ENCODE measurements at regions of chr3 and their contacts with region 1.

Region 1: GRCh38 chr3:179929091-179929529 is 107.6 kb downstream of the PEX5L start:
- DNase-seq: peak; percentile 49
- H3K4me3 Mint-ChIP-seq: no peak overlapping the region
- H3K27ac Mint-ChIP-seq: no peak overlapping the region
- H3K4me1 Mint-ChIP-seq: peaks cover 3% of the 10 kb centered on the region
- H3K27me3 Mint-ChIP-seq: peaks cover 32% of the 10 kb centered on the region

Region 2: GRCh38 chr3:179942553-179943075 is 13.5 kb after region 1 on chr3:
- CTCF ChIA-PET with region 1: interaction called, 19 read pairs
- POLR2A ChIA-PET with region 1: no interaction called
- DNase-seq: no peak
- H3K4me3 Mint-ChIP-seq: no peak overlapping the region
- H3K27ac Mint-ChIP-seq: no peak overlapping the region
- H3K4me1 Mint-ChIP-seq: peaks cover 2% of the 10 kb centered on the region
- H3K27me3 Mint-ChIP-seq: peaks cover 42% of the 10 kb centered on the region

Measured in activated CD4-positive, alpha-beta memory T cell treated with anti-CD3 and anti-CD28 coated beads, Interleukin-2, amount 10 ng/mL, durations not matched to agents 7 days and 5 days (primary cell).